ENCODE measurements at regions of chr5 and their contacts with region 1.

Region 1: GRCh38 chr5:120599576-120599975 is 135.5 kb downstream of the PRR16 start:
- DNase-seq: no peak
- ATAC-seq: no peak
- H3K4me3 ChIP-seq: no peak overlapping the region
- H3K27ac ChIP-seq: no peak overlapping the region
- H3K4me1 ChIP-seq: no peaks in the 10 kb centered on the region
- H3K27me3 ChIP-seq: no peaks in the 10 kb centered on the region
- CTCF ChIP-seq: no peak

Region 2: GRCh38 chr5:119537704-119538103 is 1061.9 kb before region 1 on chr5:
- CTCF ChIA-PET with region 1: no interaction called
- POLR2A ChIA-PET with region 1: interaction called, 14 read pairs
- in situ Hi-C with region 1: no loop called
- intact Hi-C with region 1: no loop called
- DNase-seq: no peak
- ATAC-seq: peak; percentile 38; the same call in 1 of the 2 replicates
- H3K4me3 ChIP-seq: no peak overlapping the region
- H3K27ac ChIP-seq: no peak overlapping the region
- H3K4me1 ChIP-seq: no peaks in the 10 kb centered on the region
- H3K27me3 ChIP-seq: no peaks in the 10 kb centered on the region
- CTCF ChIP-seq: no peak

Region 3: GRCh38 chr5:120564013-120564412 is 35.6 kb before region 1 on chr5:
- CTCF ChIA-PET with region 1: no interaction called
- POLR2A ChIA-PET with region 1: no interaction called
- in situ Hi-C with region 1: no loop called
- intact Hi-C with region 1: no loop called
- DNase-seq: no peak
- ATAC-seq: no peak
- H3K4me3 ChIP-seq: no peak overlapping the region
- H3K27ac ChIP-seq: no peak overlapping the region
- H3K4me1 ChIP-seq: no peaks in the 10 kb centered on the region
- H3K27me3 ChIP-seq: no peaks in the 10 kb centered on the region
- CTCF ChIP-seq: no peak

Measured in Panc1 (cell line).